ENCODE measurements at regions of chr3 and their contacts with region 1.

Region 1: DNA sequence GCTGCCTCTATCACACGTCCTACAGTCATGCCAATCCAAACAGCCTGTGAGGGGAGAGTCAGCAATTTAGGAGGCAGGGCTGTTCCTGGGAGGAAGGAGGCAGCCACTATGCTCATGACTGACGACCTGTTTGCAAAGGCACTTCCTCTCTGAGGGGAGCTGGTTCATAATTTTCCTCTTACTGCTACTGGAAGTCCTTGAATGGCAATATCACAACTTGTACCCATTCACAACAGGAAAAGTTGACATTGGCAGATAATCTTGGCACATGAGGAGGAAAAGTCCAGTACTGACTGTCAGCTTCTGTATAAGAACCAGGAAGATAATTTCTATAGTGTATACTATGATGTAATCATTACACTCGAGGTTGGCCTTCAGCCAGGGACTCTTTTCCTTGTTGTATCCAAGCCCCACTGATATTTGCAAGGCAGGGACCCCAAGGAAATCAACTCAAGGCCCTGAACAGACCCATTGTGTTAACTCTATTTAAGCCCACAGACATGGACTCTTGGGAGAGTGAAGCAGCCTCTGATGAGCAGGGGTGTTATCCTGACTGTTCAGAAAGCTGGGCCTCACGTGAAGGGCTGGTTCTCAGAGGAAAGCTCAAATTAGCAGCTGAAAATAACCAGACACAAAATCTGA is 267.3 kb upstream of the ADAMTS9 start:
- DNase-seq: peak in 1 of 2 donors; percentile 77
- H3K4me3 ChIP-seq: no peak overlapping the region
- H3K27ac ChIP-seq: peak overlapping the region; percentile 66 to 67
- H3K4me1 ChIP-seq: peaks cover 4 to 9% of the 10 kb centered on the region in 2 donors
- H3K27me3 ChIP-seq: no peaks in the 10 kb centered on the region
- CTCF ChIP-seq: no peak

Region 2: GRCh38 chr3:64977291-64978100 is 22.4 kb after region 1 on chr3:
- intact Hi-C with region 1: loop called (anchors 2 kb)
- DNase-seq: no peak
- H3K4me3 ChIP-seq: no peak overlapping the region
- H3K27ac ChIP-seq: no peak overlapping the region
- H3K4me1 ChIP-seq: peaks cover 0 to 3% of the 10 kb centered on the region in 2 donors
- H3K27me3 ChIP-seq: no peaks in the 10 kb centered on the region
- CTCF ChIP-seq: no peak

Region 3: DNA sequence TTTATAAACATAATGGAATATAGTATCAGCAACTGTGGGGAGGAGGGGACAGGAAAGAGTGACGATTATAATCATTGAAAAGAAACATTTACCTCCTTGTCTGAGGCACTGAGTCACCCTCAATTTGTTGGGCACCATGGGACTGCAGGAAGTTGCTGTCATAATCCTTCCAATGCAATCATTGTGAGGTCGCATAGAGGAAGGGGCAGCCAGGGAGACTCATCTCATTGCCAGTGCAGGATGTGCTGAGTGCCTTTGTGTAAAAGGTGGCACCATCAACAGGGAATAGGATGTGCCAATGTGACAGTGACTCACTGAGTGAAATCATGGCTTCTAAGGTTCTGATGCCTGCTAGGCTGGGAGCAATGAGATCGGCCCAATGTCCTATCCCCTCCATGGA is 33.1 kb after region 1 on chr3:
- intact Hi-C with region 1: no loop called
- DNase-seq: no peak
- H3K4me3 ChIP-seq: no peak overlapping the region
- H3K27ac ChIP-seq: no peak overlapping the region
- H3K4me1 ChIP-seq: no peaks in the 10 kb centered on the region
- H3K27me3 ChIP-seq: no peaks in the 10 kb centered on the region
- CTCF ChIP-seq: no peak

Measured in ascending aorta (tissue), 2 donors.